ENCODE measurements at regions of chr2 and their contacts with region 1.

Region 1: GRCh38 chr2:42954227-42954962 is 162.0 kb upstream of the HAAO start:
- DNase-seq: no peak
- ATAC-seq: no peak
- H3K4me3 ChIP-seq: no peak overlapping the region
- H3K4me3 Mint-ChIP-seq: no peak overlapping the region
- H3K27ac ChIP-seq: no peak overlapping the region
- H3K27ac Mint-ChIP-seq: no peak overlapping the region
- H3K4me1 ChIP-seq: no peaks in the 10 kb centered on the region
- H3K4me1 Mint-ChIP-seq: peaks cover 0 to 5% (median 0%) of the 10 kb centered on the region in 3 donors
- H3K27me3 ChIP-seq: peaks cover 0 to 8% of the 10 kb centered on the region in 2 experiments
- H3K27me3 Mint-ChIP-seq: no peaks in the 10 kb centered on the region

Region 2: DNA sequence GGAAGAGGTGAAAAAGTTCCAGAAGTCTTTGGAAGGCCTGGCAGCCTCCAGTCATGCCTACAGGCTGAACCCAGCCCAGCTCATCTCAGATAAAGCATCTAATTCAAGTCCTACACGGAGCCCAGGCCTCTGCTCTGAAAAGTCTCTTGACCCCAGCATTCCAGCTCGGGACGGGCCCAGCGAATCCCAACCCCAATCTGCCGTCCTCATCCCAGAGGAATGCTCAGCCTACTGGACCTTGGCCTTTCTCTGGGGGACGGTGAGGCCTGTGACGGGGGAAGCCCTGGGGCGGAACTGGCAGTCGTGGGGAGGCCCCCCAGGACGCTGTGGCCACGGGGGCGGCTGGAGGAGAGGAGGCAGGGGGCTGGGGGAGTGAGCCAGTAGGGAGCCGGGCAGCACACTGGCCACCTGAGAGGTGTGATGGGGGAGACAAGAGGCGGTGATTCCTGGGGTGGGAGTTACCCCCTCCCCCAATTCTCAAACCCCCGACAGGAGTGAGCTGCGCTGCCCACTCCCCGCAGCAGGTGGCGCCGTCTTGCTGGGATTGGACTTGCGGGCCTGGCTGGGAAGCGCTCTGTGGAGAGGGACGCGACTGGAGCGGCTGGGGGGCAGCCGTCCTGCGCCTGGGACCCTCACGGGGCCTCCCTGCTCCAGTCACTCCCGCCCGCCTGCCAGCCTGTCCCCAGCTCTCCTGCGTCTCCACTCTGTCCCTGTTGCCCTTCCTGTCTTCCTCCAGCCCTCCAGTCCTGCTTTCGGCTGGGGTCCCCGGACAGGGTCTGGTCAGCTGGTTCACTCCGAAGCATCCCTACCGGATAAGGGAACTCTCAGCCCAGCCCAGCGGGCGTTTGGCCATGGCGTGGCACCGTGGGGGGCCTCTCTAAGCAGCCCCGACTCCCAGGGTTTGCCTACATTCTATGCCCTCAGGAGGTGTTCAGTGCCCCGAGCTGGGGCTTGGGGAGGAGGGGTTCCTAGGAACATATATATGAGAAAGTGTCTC is 20.6 kb after region 1 on chr2:
- CTCF ChIA-PET with region 1: no interaction called
- POLR2A ChIA-PET with region 1: no interaction called
- DNase-seq: peak in 32 of 35 experiments; percentile 12 to 69 (median 43)
- ATAC-seq: peak; percentile 35 to 70 (median 64)
- H3K4me3 ChIP-seq: no peak overlapping the region
- H3K4me3 Mint-ChIP-seq: no peak overlapping the region
- H3K27ac ChIP-seq: no peak overlapping the region
- H3K27ac Mint-ChIP-seq: no peak overlapping the region
- H3K4me1 ChIP-seq: peaks cover 0 to 11% of the 10 kb centered on the region in 2 experiments
- H3K4me1 Mint-ChIP-seq: peaks cover 11 to 16% (median 14%) of the 10 kb centered on the region in 3 donors
- H3K27me3 ChIP-seq: peaks cover 0 to 5% of the 10 kb centered on the region in 2 experiments
- H3K27me3 Mint-ChIP-seq: peaks cover 2 to 4% of the 10 kb centered on the region in 2 donors

Region 3: DNA sequence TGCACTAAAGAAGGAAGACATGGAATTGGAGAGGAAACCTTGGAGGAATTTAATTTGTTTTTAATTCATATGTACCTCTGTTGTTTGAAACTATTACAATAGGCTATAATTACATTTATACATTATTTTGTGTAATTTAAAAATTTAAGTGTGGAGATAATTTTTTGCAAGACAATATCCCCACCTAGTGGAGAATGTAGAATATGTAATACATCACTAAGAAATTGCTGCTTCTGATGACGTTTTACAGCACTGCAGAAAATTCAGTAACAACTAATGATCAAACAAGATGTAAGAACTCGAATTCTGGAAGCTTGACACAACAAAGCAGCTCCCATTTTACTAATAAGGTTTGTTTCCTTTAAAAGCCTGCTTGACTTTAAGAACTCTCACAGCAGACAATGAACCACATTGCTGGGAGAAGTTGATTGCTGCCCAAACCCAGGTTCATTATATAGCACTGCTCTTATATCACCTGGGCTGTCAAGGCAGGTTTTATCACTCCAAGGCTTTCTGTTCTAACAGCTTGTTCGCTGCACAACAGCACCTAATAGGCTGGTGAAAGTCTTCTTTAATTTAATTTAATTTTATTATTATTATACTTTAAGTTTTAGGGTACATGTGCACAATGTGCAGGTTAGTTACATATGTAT is 588.0 kb after region 1 on chr2:
- CTCF ChIA-PET with region 1: no interaction called
- POLR2A ChIA-PET with region 1: interaction called in 1 of 2 experiments, 11 read pairs
- DNase-seq: peak in 2 of 35 experiments; percentile 5 to 68
- ATAC-seq: peak; percentile 43 to 94 (median 50)
- H3K4me3 ChIP-seq: no peak overlapping the region
- H3K4me3 Mint-ChIP-seq: no peak overlapping the region
- H3K27ac ChIP-seq: no peak overlapping the region
- H3K27ac Mint-ChIP-seq: no peak overlapping the region
- H3K4me1 ChIP-seq: peaks cover 2 to 4% of the 10 kb centered on the region in 2 experiments
- H3K4me1 Mint-ChIP-seq: peaks cover 14 to 16% (median 14%) of the 10 kb centered on the region in 3 donors
- H3K27me3 ChIP-seq: no peaks in the 10 kb centered on the region
- H3K27me3 Mint-ChIP-seq: no peaks in the 10 kb centered on the region

Region 4: GRCh38 chr2:43569921-43570320 is 615.5 kb after region 1 on chr2:
- CTCF ChIA-PET with region 1: interaction called in 1 of 2 experiments, 10 read pairs
- POLR2A ChIA-PET with region 1: no interaction called
- DNase-seq: peak in 1 of 35 experiments; percentile 16
- ATAC-seq: peak in 1 of 4 experiments; percentile 59
- H3K4me3 ChIP-seq: no peak overlapping the region
- H3K4me3 Mint-ChIP-seq: no peak overlapping the region
- H3K27ac ChIP-seq: no peak overlapping the region
- H3K27ac Mint-ChIP-seq: peak overlapping the region; percentile 59 to 81
- H3K4me1 ChIP-seq: peaks cover 2 to 5% of the 10 kb centered on the region in 2 experiments
- H3K4me1 Mint-ChIP-seq: peaks cover 13 to 37% (median 17%) of the 10 kb centered on the region in 3 donors
- H3K27me3 ChIP-seq: no peaks in the 10 kb centered on the region
- H3K27me3 Mint-ChIP-seq: no peaks in the 10 kb centered on the region